ENCODE measurements at regions of chr16 and their contacts with region 1.

Region 1: GRCh38 chr16:48156790-48157209 is 1.0 kb upstream of the ABCC12 start:
- DNase-seq: peak; percentile 75 to 91 (median 84)
- H3K4me3 ChIP-seq: no peak overlapping the region
- H3K27ac ChIP-seq: no peak overlapping the region
- H3K4me1 ChIP-seq: no peaks in the 10 kb centered on the region
- H3K27me3 ChIP-seq: no peaks in the 10 kb centered on the region
- CTCF ChIP-seq: peak; percentile 83 to 96 (median 90)
- POLR2A ChIP-seq: no peak

Region 2: GRCh38 chr16:46947900-46948547 is 1208.8 kb before region 1 on chr16:
- intact Hi-C with region 1: loop called in 1 of 2 experiments (anchors 5 kb)
- DNase-seq: peak in 4 of 7 donors; percentile 28 to 55 (median 38)
- H3K4me3 ChIP-seq: no peak overlapping the region
- H3K27ac ChIP-seq: no peak overlapping the region
- H3K4me1 ChIP-seq: no peaks in the 10 kb centered on the region
- H3K27me3 ChIP-seq: no peaks in the 10 kb centered on the region
- CTCF ChIP-seq: peak; percentile 42 to 70 (median 62)
- POLR2A ChIP-seq: no peak

Region 3: GRCh38 chr16:48373258-48374029 is 216.6 kb after region 1 on chr16:
- intact Hi-C with region 1: no loop called
- DNase-seq: no peak
- H3K4me3 ChIP-seq: no peak overlapping the region
- H3K27ac ChIP-seq: no peak overlapping the region
- H3K4me1 ChIP-seq: peaks cover 27 to 65% of the 10 kb centered on the region in 2 donors
- H3K27me3 ChIP-seq: no peaks in the 10 kb centered on the region
- CTCF ChIP-seq: no peak
- POLR2A ChIP-seq: no peak

Measured in adrenal gland (tissue), 19 donors.